ENCODE measurements at regions of chr7 and their contacts with region 1.

Region 1: GRCh38 chr7:102272075-102272917 is 14.4 kb upstream of the SH2B2 start:
- DNase-seq: peak; percentile 83
- ATAC-seq: peak; percentile 93
- H3K4me3 Mint-ChIP-seq: no peak overlapping the region
- H3K27ac Mint-ChIP-seq: no peak overlapping the region
- H3K4me1 Mint-ChIP-seq: peaks cover 2% of the 10 kb centered on the region
- H3K27me3 Mint-ChIP-seq: no peaks in the 10 kb centered on the region
- CTCF ChIP-seq: peak; percentile 98

Region 2: DNA sequence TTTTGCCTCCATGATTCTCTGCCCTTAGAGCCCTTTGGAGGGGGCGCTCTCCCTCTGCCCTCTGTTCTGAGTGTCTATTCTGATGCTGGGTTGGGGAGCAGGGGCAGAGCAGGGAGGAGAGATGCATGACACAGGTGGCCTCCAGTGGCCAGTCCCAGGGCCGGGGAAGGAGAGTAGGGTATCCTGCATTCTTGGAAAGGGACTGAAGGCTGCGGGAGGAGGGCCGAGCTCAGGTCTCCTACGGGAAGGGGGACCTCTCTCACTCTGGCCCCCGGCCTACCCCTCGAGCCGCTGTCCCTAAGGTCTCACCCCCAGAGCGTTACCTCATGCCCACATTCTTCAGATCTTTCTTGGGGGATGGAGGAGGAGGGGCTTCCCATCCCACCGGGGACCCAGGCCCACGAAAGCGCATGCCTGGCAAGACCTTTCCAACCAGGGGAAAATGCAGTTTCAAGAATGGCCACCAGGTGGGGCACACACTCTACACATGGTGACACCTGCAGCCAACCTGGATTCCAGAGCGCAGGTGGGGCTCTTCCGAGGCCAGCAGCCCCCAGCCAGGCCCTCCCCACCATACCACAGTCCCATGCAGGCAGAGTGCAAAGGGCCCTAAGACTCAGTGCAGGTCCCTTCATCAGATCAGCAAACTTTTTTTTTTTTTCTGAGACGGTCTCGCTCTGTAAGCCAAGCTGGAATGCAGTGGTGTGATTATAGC is 729.6 kb before region 1 on chr7:
- CTCF ChIA-PET with region 1: interaction called, 23 read pairs
- POLR2A ChIA-PET with region 1: no interaction called
- intact Hi-C with region 1: loop called (anchors 5 kb)
- DNase-seq: peak; percentile 86
- ATAC-seq: peak; percentile 68
- H3K4me3 Mint-ChIP-seq: no peak overlapping the region
- H3K27ac Mint-ChIP-seq: no peak overlapping the region
- H3K4me1 Mint-ChIP-seq: no peaks in the 10 kb centered on the region
- H3K27me3 Mint-ChIP-seq: peaks cover under 1% of the 10 kb centered on the region
- CTCF ChIP-seq: peak; percentile 90

Region 3: GRCh38 chr7:102169651-102170392 is 102.5 kb before region 1 on chr7:
- CTCF ChIA-PET with region 1: no interaction called
- POLR2A ChIA-PET with region 1: no interaction called
- intact Hi-C with region 1: no loop called
- DNase-seq: no peak
- ATAC-seq: no peak
- H3K4me3 Mint-ChIP-seq: no peak overlapping the region
- H3K27ac Mint-ChIP-seq: no peak overlapping the region
- H3K4me1 Mint-ChIP-seq: no peaks in the 10 kb centered on the region
- H3K27me3 Mint-ChIP-seq: no peaks in the 10 kb centered on the region
- CTCF ChIP-seq: no peak

Region 4: DNA sequence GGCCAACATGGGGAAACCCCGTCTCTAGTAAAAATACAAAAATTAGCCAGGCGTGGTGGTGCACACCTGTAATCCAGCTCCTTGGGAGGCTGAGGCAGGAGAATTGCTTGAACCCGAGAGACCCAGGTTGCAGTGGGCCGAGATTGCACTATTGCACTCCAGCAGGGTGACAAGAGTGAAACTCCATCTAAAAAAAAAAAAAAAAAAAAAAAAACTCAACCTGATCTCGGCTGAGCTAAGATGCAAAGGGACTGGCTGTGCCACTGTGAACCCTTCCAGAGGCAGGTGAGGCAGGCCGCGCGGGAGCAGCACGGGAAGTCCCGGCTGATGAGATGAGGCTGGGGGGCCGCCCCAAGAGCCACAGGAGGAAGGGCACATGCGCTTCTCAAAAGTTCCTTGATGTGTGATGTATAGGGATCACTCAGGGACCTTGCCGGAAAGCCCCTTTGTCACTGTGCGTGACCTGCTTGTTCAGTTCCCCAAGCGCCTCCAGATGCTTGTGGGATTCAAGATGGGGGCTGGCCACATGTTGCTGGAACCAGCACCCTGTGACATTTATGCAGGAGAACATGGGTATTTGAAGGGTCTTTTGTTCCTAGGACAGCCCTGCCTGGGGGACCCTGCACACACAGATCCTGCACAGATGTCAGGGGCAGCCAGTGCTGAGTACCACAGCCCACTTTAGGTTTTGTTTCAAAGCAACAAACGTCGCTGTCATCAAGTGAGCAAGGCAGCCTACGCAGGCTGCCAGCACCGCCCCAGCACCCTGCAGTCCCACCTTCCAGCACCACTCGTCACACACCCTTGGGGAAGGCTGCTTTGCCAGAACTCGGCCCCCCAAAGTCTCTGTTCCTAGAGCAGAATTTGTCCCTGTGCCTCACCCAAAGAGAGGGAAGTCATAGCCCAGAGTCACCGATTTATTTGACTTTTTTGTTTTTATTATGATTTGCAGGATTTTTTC is 60.4 kb before region 1 on chr7:
- CTCF ChIA-PET with region 1: no interaction called
- POLR2A ChIA-PET with region 1: no interaction called
- intact Hi-C with region 1: no loop called
- DNase-seq: no peak
- ATAC-seq: no peak
- H3K4me3 Mint-ChIP-seq: no peak overlapping the region
- H3K27ac Mint-ChIP-seq: no peak overlapping the region
- H3K4me1 Mint-ChIP-seq: no peaks in the 10 kb centered on the region
- H3K27me3 Mint-ChIP-seq: no peaks in the 10 kb centered on the region
- CTCF ChIP-seq: no peak

Region 5: DNA sequence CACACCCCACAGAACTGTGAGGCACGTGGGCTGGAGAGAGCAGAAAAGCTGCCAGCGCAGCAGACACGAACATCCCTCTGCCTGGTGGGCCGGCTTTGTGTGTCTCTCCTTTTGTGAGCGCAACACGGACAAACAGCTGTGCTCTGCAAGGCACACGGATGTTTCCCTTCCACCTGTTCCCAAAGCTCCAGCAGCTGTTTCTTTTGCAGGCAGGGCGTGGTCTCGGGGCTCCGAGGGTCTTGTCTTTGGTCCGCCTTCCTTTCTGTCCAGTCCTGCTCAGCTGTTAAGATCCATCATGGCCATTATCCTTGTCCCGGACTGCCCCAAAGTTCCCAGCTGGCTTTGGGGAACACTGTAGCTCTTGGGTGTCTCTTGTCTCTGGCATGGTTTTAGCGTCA is 18.3 kb before region 1 on chr7:
- CTCF ChIA-PET with region 1: interaction called, 14 read pairs
- POLR2A ChIA-PET with region 1: interaction called, 3 read pairs
- intact Hi-C with region 1: no loop called
- DNase-seq: no peak
- ATAC-seq: no peak
- H3K4me3 Mint-ChIP-seq: no peak overlapping the region
- H3K27ac Mint-ChIP-seq: no peak overlapping the region
- H3K4me1 Mint-ChIP-seq: no peaks in the 10 kb centered on the region
- H3K27me3 Mint-ChIP-seq: no peaks in the 10 kb centered on the region
- CTCF ChIP-seq: no peak

Measured in activated CD8-positive, alpha-beta T cell treated with anti-CD3 and anti-CD28 coated beads for 36 hours (primary cell).